Sigmoid colon (tissue), 7 donors: ENCODE measurements at regions of chr11 and their contacts with region 1.

Region 1: DNA sequence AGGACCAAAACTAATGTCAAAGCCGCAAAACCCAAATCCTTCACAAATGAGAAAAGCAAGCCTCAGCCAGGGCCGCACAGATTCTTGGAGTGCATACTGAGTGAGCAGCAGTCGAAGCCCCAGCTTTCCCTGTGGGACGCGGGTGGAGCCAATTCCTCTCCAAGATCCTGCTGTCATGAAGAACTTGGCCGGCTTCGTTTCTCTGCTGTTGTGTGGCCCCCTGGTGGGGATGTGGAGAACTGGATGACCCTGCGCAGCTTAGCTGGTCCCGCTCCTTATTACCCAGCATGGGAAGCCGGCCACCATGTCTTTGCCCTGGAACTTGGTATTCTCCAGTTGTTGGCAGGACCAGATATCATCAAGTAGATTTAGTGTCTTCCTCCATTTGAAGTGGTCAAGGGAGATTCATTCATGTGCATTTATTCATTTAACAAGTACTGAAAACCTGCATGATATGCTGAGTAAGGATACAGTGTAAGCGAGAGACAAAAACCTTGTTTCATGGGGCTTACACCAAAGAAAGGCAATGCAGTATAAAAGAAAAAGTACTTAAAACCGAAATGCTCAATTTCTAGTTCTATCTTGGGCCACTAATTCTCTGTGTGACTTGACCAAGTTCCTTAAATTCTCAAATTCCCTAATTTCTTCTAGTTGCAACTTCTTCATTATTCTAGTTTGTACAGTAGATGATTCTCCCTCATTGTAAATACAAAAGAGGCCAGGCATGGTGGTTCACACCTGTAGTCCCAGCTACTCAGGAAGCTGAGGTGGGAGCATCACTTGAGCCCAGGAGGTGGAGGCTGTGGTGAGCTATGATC is 56.7 kb upstream of the CRTAM start:
- DNase-seq: peak; percentile 95
- H3K4me3 ChIP-seq: no peak overlapping the region
- H3K27ac ChIP-seq: peak overlapping the region in 1 of 4 donors; percentile 30
- H3K4me1 ChIP-seq: peaks cover 0 to 8% (median 6%) of the 10 kb centered on the region in 4 donors
- H3K27me3 ChIP-seq: no peaks in the 10 kb centered on the region
- CTCF ChIP-seq: peak; percentile 92 to 94 (median 94)
- EP300 ChIP-seq: no peak
- POLR2A ChIP-seq: no peak

Region 2: DNA sequence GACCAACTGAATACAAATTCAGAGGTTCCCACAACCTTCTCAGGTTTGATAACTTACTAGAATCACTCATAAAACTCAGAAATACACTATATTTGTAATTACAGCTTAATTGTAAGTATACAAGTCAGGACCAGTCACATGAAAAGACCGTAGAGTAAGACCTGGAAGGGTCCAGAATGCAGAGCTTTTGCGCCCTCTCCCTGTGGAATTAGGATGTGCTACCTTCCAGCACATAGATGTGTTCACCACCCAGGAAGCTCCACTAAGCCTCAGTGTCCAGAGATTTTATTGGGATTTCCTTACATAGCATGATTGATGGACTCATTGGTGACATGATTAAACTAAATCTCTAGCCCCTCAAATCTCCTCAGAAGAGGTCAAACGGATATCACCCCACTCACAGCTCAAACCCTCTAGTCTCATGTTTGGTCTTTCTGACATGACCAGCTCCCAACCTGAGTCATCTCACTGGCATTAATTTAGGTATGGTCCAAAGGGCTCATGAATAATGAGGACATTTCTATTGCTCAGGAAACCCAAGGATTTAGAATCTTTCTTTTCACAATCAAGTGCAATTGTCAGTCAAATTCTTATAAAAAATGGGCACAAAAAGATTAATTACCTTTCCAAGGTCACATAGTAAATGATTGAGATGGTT is 203.3 kb before region 1 on chr11:
- intact Hi-C with region 1: loop called (anchors 1 kb)
- DNase-seq: no peak
- H3K4me3 ChIP-seq: no peak overlapping the region
- H3K27ac ChIP-seq: no peak overlapping the region
- H3K4me1 ChIP-seq: peaks cover 0 to 5% (median 2%) of the 10 kb centered on the region in 4 donors
- H3K27me3 ChIP-seq: no peaks in the 10 kb centered on the region
- CTCF ChIP-seq: no peak
- EP300 ChIP-seq: no peak
- POLR2A ChIP-seq: no peak

Region 3: DNA sequence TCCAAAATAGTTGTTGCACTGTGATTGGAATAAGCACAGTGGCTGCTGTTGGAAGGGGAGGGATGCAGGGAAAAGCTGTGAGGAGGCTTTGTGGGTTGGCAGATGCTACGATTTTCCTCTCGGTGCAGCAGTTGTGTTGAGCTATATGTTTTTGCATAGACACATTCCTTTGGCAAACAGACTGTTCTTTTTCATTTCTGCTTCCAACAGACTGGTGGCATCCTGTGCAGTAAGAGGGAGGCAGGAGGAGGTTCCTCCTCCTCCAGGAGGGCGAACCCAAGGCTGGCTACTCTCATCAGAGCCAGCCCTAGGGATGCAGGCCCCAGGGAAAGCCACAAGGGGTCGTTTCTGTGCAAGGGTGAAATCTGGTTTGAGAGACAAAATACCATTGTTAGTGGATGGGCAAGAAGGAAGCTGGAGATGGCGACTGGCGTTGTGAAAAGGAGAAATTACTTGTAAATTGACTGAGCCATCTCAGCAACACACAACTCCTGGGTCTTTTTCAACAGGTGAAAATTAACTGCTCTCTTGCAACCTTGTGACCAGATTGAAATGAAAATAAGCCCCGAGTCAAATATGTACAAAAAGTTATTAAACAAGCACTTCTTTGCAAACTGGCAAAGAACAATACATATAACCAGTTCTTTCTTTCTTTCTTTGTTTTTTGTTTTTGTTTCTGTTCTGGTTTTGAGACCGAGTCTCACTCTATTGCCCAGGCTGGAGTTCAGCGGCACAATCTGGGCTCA is 152.6 kb before region 1 on chr11:
- intact Hi-C with region 1: loop called (anchors 1 kb)
- DNase-seq: peak; percentile 80
- H3K4me3 ChIP-seq: no peak overlapping the region
- H3K27ac ChIP-seq: no peak overlapping the region
- H3K4me1 ChIP-seq: peaks cover 0 to 12% (median 5%) of the 10 kb centered on the region in 4 donors
- H3K27me3 ChIP-seq: no peaks in the 10 kb centered on the region
- CTCF ChIP-seq: peak; percentile 69 to 80 (median 72)
- EP300 ChIP-seq: no peak
- POLR2A ChIP-seq: no peak

Region 4: GRCh38 chr11:122634497-122634896 is 147.1 kb before region 1 on chr11:
- intact Hi-C with region 1: loop called (anchors 1 kb)
- DNase-seq: peak; percentile 54
- H3K4me3 ChIP-seq: no peak overlapping the region
- H3K27ac ChIP-seq: no peak overlapping the region
- H3K4me1 ChIP-seq: peaks cover 0 to 3% (median under 1%) of the 10 kb centered on the region in 4 donors
- H3K27me3 ChIP-seq: no peaks in the 10 kb centered on the region
- CTCF ChIP-seq: no peak
- EP300 ChIP-seq: no peak
- POLR2A ChIP-seq: no peak

Region 5: GRCh38 chr11:122769126-122769780 is 12.3 kb before region 1 on chr11:
- intact Hi-C with region 1: no loop called
- DNase-seq: no peak
- H3K4me3 ChIP-seq: no peak overlapping the region
- H3K27ac ChIP-seq: no peak overlapping the region
- H3K4me1 ChIP-seq: no peaks in the 10 kb centered on the region
- H3K27me3 ChIP-seq: no peaks in the 10 kb centered on the region
- CTCF ChIP-seq: no peak
- EP300 ChIP-seq: no peak
- POLR2A ChIP-seq: no peak

Region 6: DNA sequence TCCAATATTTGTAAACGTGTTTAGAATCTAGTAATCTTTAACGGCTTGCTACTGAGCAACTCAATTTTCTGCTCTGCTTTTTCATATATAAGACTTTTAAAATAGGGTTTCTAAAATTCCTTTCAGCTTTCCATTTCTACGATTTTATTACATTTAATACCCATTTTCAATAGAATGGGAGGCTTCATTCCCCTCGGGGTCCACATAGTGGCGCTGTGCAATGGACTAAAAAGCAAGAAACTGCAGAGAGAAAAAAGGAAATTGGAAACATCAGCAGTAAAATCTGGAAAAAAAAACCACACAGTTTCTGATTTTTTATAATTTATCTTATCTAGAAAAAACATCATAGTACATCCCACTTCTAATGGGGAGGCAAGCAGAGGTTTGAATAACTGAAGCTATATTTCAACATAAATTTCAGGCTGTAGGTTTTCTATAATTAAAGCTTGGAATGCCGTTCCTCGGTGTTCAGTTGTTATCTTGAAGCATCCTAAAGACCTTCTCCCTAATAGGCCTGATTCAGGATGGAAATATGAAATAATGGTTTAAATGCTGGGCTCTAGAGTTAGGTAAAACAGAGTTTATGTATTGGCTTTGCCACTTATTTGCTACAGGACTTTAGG is 82.2 kb after region 1 on chr11:
- intact Hi-C with region 1: no loop called
- DNase-seq: no peak
- H3K4me3 ChIP-seq: no peak overlapping the region
- H3K27ac ChIP-seq: no peak overlapping the region
- H3K4me1 ChIP-seq: no peaks in the 10 kb centered on the region
- H3K27me3 ChIP-seq: no peaks in the 10 kb centered on the region
- CTCF ChIP-seq: peak; percentile 43 to 65 (median 48)
- EP300 ChIP-seq: no peak
- POLR2A ChIP-seq: no peak